Endothelial cell of umbilical vein (primary cell): ENCODE measurements at regions of chr2 and their contacts with region 1.

Region 1: GRCh38 chr2:46335391-46336282 is 38.4 kb downstream of the EPAS1 start:
- DNase-seq: peak; percentile 88
- H3K4me3 ChIP-seq: peak overlapping the region in 1 of 3 experiments; percentile 29
- H3K27ac ChIP-seq: peak overlapping the region; percentile 87
- H3K4me1 ChIP-seq: peaks cover 37% of the 10 kb centered on the region
- H3K27me3 ChIP-seq: no peaks in the 10 kb centered on the region
- CTCF ChIP-seq: no peak
- POLR2A ChIP-seq: peak; percentile 9

Region 2: GRCh38 chr2:46364797-46365457 is 29.3 kb after region 1 on chr2:
- CTCF ChIA-PET with region 1: interaction called, 13 read pairs
- POLR2A ChIA-PET with region 1: no interaction called
- dilution Hi-C with region 1: no loop called
- intact Hi-C with region 1: no loop called
- DNase-seq: peak; percentile 70
- H3K4me3 ChIP-seq: no peak overlapping the region
- H3K27ac ChIP-seq: no peak overlapping the region
- H3K4me1 ChIP-seq: peaks cover 24% of the 10 kb centered on the region
- H3K27me3 ChIP-seq: no peaks in the 10 kb centered on the region
- CTCF ChIP-seq: peak; percentile 61 to 63
- POLR2A ChIP-seq: no peak